Activated T-helper 2 cell treated with anti-CD3 and anti-CD28 coated beads, Interferon-gamma antibody, Interleukin-2, Interleukin-4, amounts not matched to agents 10 μg/mL and 5 μg/mL and 100 μg/mL, durations not matched to agents 14 hours and 24 hours and 36 hours (primary cell): ENCODE measurements at regions of chr9 and their contacts with region 1.

Region 1: DNA sequence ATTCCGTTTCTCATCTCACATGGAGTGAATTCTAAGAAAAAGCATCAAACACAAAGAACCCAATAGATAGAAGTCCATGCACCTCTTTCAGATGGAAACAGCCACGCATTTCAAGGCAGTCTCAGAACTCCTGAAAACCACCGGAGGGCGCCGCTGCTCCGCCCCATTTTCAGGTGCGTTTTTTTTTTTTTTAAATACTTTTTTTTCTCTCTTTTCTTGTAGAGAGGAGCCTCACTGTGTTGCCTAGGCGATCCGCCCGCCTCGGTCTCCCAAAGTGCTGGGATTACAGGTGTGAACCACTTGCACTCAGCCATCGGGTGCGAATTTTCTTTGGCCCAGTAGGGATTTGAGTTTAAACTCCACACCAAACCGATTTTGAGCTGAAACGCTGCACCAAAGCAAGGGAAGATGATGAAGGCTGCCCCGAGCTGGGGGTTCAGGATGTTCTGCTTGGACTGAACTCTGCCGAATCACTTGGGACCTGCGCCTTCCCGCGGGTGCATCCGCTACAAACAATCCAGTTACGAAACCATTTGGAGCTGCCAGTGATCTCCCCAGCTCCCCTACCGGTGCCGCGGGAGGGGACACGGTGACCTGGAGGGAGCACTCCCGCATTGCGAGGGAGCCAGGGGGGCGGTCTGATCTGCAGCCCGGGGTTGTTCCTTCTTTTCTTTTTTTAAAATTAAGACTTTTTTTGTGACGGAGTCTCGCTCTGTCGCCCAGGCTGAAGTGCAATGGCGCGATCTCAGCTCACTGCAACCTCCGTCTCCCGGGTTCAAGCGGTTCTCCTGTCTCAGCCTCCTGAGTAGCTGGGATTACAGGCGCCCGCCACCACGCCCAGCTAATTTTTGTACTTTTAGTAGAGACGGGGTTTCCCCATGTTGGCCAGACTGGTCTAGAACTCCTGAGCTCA is 1.4 kb downstream of the PTGR1 start:
- DNase-seq: peak; percentile 26
- H3K4me3 Mint-ChIP-seq: peak overlapping the region; percentile 86
- H3K27ac Mint-ChIP-seq: no peak overlapping the region
- H3K4me1 Mint-ChIP-seq: peaks cover 18% of the 10 kb centered on the region
- H3K27me3 Mint-ChIP-seq: peaks cover 36% of the 10 kb centered on the region

Region 2: DNA sequence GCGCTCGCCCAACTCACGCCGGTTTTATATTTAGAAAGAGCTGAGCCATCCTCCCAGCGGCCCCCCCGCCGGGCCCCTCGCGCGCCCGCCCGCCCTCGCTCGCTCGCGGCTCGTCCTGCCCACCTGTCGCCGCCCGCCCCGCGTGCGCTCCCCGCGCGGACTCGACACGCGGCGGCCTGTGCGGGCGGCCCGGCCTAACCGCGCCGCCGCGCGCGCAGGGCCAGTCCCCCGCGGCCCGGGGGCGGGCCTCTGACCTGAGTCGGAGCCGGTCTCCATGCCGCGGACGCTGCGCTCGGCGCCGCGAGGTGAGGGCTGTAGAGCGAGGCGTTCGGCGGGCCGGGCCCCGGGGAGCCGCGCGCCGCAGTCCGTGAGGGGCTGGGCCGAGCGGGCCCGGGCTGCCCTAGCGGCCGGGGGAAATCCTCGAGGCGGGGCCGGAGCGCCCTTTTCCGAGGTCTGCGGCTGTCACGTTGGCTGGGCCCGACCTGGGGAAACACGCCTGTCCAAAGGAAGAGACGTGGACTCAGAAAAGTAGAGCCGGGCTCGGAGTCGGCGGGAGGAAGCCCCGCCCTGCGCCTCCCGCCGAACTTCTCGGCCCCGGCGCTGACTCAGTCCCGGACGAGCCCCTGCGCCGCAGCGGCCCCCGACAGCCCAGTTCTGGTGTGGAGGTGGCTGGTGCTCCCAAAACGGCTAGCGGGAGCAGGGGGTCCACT is 114.1 kb before region 1 on chr9 and contains the start of gene ECPAS:
- intact Hi-C with region 1: loop called (anchors 2 kb)
- DNase-seq: peak; percentile 59
- H3K4me3 Mint-ChIP-seq: peak within 1 kb of the TSS; percentile 84
- H3K27ac Mint-ChIP-seq: peak within 1 kb of the TSS; percentile 82
- H3K4me1 Mint-ChIP-seq: peaks cover 23% of the 10 kb centered on the region
- H3K27me3 Mint-ChIP-seq: peaks cover 9% of the 10 kb centered on the region
- total RNA-seq, gene ECPAS: 96.8 and 107 TPM in 2 replicates

Region 3: GRCh38 chr9:111525056-111525977 is 72.8 kb before region 1 on chr9 and contains the start of gene ZNF483:
- intact Hi-C with region 1: loop called (anchors 10 kb)
- DNase-seq: peak; percentile 59
- H3K4me3 Mint-ChIP-seq: peak within 1 kb of the TSS; percentile 90
- H3K27ac Mint-ChIP-seq: peak within 1 kb of the TSS; percentile 80
- H3K4me1 Mint-ChIP-seq: peaks cover 22% of the 10 kb centered on the region
- H3K27me3 Mint-ChIP-seq: no peaks in the 10 kb centered on the region
- total RNA-seq, gene ZNF483: 3.1 and 3.2 TPM in 2 replicates

Region 4: DNA sequence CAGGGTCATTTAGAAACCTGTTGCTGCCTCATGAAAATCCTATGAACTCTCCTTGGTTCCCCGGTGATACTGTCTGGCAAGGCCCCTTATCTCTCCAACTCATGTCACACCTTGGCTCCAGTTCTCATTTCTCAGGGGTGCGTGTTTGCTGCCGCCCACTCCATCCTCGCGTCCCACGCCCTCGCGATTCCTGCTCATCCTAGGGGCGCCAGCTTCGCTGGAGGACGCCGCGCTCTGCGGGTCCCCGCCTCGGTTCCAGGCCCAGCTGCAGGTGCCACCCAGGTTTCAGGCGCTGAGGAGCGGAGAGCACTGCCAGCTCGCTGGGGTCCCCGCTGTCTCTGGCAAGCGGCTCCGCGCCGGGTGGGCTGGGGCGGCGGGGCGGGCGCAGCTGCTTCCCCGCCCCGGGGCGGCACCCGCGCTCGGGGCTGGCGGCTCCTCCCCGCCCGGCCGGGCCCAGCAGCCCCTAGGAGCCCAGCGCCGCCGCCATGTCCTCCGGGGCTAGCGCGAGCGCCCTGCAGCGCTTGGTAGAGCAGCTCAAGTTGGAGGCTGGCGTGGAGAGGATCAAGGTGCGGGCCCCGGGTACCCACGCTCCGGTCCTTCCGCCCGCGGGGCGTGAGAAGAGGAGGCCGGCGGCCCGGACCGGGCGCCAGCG is 63.2 kb after region 1 on chr9 and contains the start of gene GNG10:
- intact Hi-C with region 1: loop called (anchors 2 kb)
- DNase-seq: peak; percentile 62
- H3K4me3 Mint-ChIP-seq: peak within 1 kb of the TSS; percentile 87
- H3K27ac Mint-ChIP-seq: peak within 1 kb of the TSS; percentile 83
- H3K4me1 Mint-ChIP-seq: peaks cover 19% of the 10 kb centered on the region
- H3K27me3 Mint-ChIP-seq: no peaks in the 10 kb centered on the region
- total RNA-seq, gene GNG10: 30.7 and 30.9 TPM in 2 replicates

Region 5: GRCh38 chr9:111691672-111692329 is 93.7 kb after region 1 on chr9:
- intact Hi-C with region 1: loop called (anchors 5 kb)
- DNase-seq: no peak
- H3K4me3 Mint-ChIP-seq: no peak overlapping the region
- H3K27ac Mint-ChIP-seq: no peak overlapping the region
- H3K4me1 Mint-ChIP-seq: no peaks in the 10 kb centered on the region
- H3K27me3 Mint-ChIP-seq: no peaks in the 10 kb centered on the region

Region 6: GRCh38 chr9:112074250-112075008 is 476.4 kb after region 1 on chr9:
- intact Hi-C with region 1: loop called (anchors 2 kb)
- DNase-seq: peak; percentile 31
- H3K4me3 Mint-ChIP-seq: no peak overlapping the region
- H3K27ac Mint-ChIP-seq: no peak overlapping the region
- H3K4me1 Mint-ChIP-seq: peaks cover 9% of the 10 kb centered on the region
- H3K27me3 Mint-ChIP-seq: peaks cover 1% of the 10 kb centered on the region